ENCODE measurements at regions of chr6 and their contacts with region 1.

Region 1: DNA sequence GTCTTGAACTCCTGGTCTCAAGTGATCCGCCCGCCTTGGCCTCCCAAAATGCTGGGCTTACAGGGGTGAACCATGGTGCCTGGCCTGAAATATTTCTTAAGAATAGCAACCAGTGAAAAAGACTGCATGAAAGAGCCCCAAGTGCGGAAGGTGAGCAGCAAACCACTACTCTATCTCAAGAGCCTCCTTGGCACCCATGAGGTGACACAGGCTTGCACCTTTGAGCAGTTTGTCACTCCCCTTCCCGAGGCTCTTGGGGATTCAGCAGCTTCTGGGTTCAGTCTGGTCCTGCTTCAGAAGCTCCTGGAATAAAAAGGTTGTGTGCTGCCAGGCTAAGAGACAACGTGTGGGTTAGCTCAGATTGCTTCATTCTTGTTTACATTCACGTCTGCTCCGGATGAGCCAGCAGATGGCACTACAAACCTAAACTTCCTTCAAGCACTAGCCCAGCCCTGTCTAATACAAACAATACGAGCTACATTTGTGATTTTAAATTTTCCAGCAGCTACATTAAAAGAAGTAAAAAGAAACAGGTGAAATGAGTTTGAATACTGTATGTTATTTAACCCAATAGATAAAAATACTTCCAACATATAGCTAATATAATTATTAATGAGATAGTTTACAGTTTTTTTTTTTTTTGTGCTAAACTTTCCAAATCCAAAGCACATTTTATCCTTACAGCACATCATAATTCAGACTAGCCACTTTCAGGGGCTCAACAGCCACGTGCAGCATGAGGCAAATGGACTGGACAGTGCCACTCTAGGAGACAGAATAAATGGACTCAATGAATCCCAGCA is 46.2 kb downstream of the GJA10 start:
- DNase-seq: peak; percentile 38 to 87 (median 69)
- ATAC-seq: peak; percentile 95
- H3K4me3 ChIP-seq: no peak overlapping the region
- H3K4me3 Mint-ChIP-seq: no peak overlapping the region
- H3K27ac ChIP-seq: no peak overlapping the region
- H3K27ac Mint-ChIP-seq: peak overlapping the region; percentile 81
- H3K4me1 ChIP-seq: peaks cover 16% of the 10 kb centered on the region
- H3K4me1 Mint-ChIP-seq: peaks cover 40% of the 10 kb centered on the region
- H3K27me3 ChIP-seq: no peaks in the 10 kb centered on the region
- H3K27me3 Mint-ChIP-seq: no peaks in the 10 kb centered on the region
- CTCF ChIP-seq: peak; percentile 80

Region 2: GRCh38 chr6:89970609-89971337 is 30.3 kb after region 1 on chr6:
- CTCF ChIA-PET with region 1: interaction called, 15 read pairs
- POLR2A ChIA-PET with region 1: no interaction called
- intact Hi-C with region 1: loop called in 1 of 2 experiments (anchors 2 kb)
- DNase-seq: peak in 2 of 9 experiments; percentile 49 to 63
- ATAC-seq: peak; percentile 65
- H3K4me3 ChIP-seq: no peak overlapping the region
- H3K4me3 Mint-ChIP-seq: no peak overlapping the region
- H3K27ac ChIP-seq: no peak overlapping the region
- H3K27ac Mint-ChIP-seq: no peak overlapping the region
- H3K4me1 ChIP-seq: peaks cover 9% of the 10 kb centered on the region
- H3K4me1 Mint-ChIP-seq: peaks cover 26% of the 10 kb centered on the region
- H3K27me3 ChIP-seq: no peaks in the 10 kb centered on the region
- H3K27me3 Mint-ChIP-seq: no peaks in the 10 kb centered on the region
- CTCF ChIP-seq: peak; percentile 39

Region 3: GRCh38 chr6:90110971-90111370 is 170.5 kb after region 1 on chr6:
- CTCF ChIA-PET with region 1: interaction called, 9 read pairs
- POLR2A ChIA-PET with region 1: no interaction called
- intact Hi-C with region 1: loop called (anchors 2 kb)
- DNase-seq: peak; percentile 34 to 88 (median 68)
- ATAC-seq: peak; percentile 85
- H3K4me3 ChIP-seq: no peak overlapping the region
- H3K4me3 Mint-ChIP-seq: peak overlapping the region; percentile 42
- H3K27ac ChIP-seq: peak overlapping the region in 1 of 2 experiments; percentile 42
- H3K27ac Mint-ChIP-seq: peak overlapping the region; percentile 86
- H3K4me1 ChIP-seq: peaks cover 53% of the 10 kb centered on the region
- H3K4me1 Mint-ChIP-seq: peaks cover 68% of the 10 kb centered on the region
- H3K27me3 ChIP-seq: no peaks in the 10 kb centered on the region
- H3K27me3 Mint-ChIP-seq: no peaks in the 10 kb centered on the region
- CTCF ChIP-seq: no peak

Region 4: DNA sequence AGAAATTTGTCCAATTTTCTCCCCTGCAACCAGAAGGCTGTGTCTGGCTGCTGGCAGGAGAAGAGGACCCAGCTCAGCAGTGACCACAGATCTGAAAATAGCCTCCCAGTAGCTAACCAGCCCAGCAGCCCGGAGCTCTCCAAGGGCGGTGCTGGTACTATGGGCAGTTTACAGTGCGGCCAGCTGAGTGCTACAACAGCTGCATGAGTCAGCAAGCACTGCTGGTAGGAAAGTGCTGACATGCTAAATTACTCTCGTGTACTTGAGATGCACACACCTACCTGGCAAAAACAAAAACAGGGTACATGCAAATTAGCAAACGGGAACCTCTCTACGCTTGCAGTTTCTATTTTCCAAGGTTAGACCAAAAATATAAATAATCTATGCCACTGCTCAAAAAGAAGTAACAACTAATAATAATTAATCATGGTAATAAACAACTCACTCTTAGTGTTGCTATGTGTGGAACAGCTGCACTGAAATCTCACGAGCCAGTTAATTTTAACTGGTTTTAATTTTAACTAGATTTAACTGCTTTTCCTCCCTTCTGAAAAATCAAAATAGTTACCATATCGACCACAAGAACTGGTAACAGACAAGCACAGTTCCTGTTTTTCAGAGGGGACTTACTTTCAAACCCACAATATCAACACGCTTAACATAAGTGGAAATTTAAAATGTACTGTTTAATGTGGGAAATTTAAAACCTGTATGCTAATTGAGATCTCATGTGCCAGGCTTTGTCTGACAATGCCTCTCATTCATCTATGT is 345.4 kb after region 1 on chr6:
- CTCF ChIA-PET with region 1: interaction called, 16 read pairs
- POLR2A ChIA-PET with region 1: interaction called, 6 read pairs
- intact Hi-C with region 1: no loop called
- DNase-seq: peak in 5 of 9 experiments; percentile 46 to 77 (median 64)
- ATAC-seq: peak; percentile 46
- H3K4me3 ChIP-seq: peak overlapping the region; percentile 30 to 62
- H3K4me3 Mint-ChIP-seq: peak overlapping the region; percentile 83
- H3K27ac ChIP-seq: peak overlapping the region; percentile 1 to 74
- H3K27ac Mint-ChIP-seq: peak overlapping the region; percentile 93
- H3K4me1 ChIP-seq: peaks cover 93% of the 10 kb centered on the region
- H3K4me1 Mint-ChIP-seq: peaks cover 90% of the 10 kb centered on the region
- H3K27me3 ChIP-seq: no peaks in the 10 kb centered on the region
- H3K27me3 Mint-ChIP-seq: no peaks in the 10 kb centered on the region
- CTCF ChIP-seq: no peak

Region 5: DNA sequence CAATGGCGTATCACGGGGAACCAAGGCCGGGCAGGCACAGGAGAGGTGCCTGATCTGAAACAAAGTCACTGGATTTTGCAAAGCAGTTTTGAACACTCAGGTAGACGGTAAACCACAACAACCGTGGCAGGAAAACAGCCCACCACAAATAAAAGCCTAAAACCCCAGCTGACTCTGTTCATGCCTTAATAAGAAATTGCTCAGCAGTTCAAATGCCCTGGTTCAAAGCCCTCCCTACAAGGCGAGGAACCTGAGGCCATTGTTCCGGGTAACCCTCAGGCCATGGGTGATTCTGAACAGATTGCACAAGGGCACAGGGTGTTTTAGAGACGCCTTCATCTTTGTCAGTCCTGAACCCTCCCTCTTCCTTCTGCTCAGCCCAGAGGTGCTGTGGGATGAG is 532.3 kb after region 1 on chr6:
- CTCF ChIA-PET with region 1: interaction called, 152 read pairs
- POLR2A ChIA-PET with region 1: interaction called, 3 read pairs
- intact Hi-C with region 1: no loop called
- DNase-seq: peak in 4 of 9 experiments; percentile 20 to 64 (median 32)
- ATAC-seq: peak; percentile 47
- H3K4me3 ChIP-seq: peak overlapping the region in 1 of 2 experiments; percentile 9
- H3K4me3 Mint-ChIP-seq: peak overlapping the region; percentile 76
- H3K27ac ChIP-seq: no peak overlapping the region
- H3K27ac Mint-ChIP-seq: no peak overlapping the region
- H3K4me1 ChIP-seq: peaks cover 32% of the 10 kb centered on the region
- H3K4me1 Mint-ChIP-seq: peaks cover 40% of the 10 kb centered on the region
- H3K27me3 ChIP-seq: no peaks in the 10 kb centered on the region
- H3K27me3 Mint-ChIP-seq: no peaks in the 10 kb centered on the region
- CTCF ChIP-seq: no peak

Measured in CD8-positive, alpha-beta T cell (primary cell).